Activated CD8-positive, alpha-beta T cell treated with anti-CD3 and anti-CD28 coated beads, Interleukin-2, amount 10 ng/mL, durations not matched to agents 7 days and 5 days (primary cell): ENCODE measurements at regions of chr14 and their contacts with region 1.

Region 1: GRCh38 chr14:50099335-50099734 is 17.0 kb downstream of the VCPKMT start:
- DNase-seq: no peak
- ATAC-seq: no peak
- H3K4me3 Mint-ChIP-seq: no peak overlapping the region
- H3K27ac Mint-ChIP-seq: peak overlapping the region; percentile 33
- H3K4me1 Mint-ChIP-seq: peaks cover 85% of the 10 kb centered on the region
- H3K27me3 Mint-ChIP-seq: no peaks in the 10 kb centered on the region

Region 2: GRCh38 chr14:49879683-49880204 is 219.6 kb before region 1 on chr14:
- CTCF ChIA-PET with region 1: interaction called, 23 read pairs
- POLR2A ChIA-PET with region 1: interaction called, 4 read pairs
- DNase-seq: peak; percentile 73
- ATAC-seq: peak; percentile 91
- H3K4me3 Mint-ChIP-seq: no peak overlapping the region
- H3K27ac Mint-ChIP-seq: peak overlapping the region; percentile 43
- H3K4me1 Mint-ChIP-seq: peaks cover 29% of the 10 kb centered on the region
- H3K27me3 Mint-ChIP-seq: peaks cover 2% of the 10 kb centered on the region

Region 3: DNA sequence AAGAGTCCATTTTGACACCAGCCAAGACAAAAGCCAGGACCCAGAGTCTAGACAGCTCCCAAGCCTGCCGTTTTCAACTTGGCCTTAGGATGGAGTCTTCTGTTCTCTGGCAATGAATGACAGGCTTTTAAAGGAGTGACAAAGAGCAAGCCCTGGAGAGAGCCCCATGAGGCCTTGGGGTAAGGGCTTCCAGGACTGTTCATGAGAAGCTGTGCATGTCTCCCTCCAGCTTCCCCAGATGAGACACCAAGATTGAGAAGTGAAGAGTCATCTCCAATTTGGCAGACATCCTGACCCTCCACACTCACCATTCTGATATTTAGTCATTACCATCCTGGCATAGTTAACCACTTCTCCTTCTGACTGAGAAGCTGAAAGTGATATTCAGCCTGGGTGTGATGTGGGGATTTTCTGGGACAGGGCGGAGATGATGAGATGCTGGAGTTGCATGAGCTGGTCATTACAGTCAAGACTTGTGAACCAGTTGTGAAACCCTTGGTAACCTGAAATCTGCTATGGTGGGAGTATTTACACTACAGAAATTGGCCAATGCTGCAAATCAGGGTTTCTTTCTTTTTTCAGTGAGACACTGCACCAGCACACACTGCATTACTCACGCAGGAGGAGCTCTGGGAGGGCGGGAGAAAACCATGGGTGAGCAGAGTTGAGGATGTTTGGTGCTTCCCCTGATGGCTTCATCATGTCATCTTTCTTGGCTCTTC is 60.8 kb before region 1 on chr14:
- CTCF ChIA-PET with region 1: interaction called, 16 read pairs
- POLR2A ChIA-PET with region 1: interaction called, 6 read pairs
- DNase-seq: peak; percentile 44
- ATAC-seq: peak; percentile 22
- H3K4me3 Mint-ChIP-seq: peak overlapping the region; percentile 74
- H3K27ac Mint-ChIP-seq: peak overlapping the region; percentile 98
- H3K4me1 Mint-ChIP-seq: peaks cover 85% of the 10 kb centered on the region
- H3K27me3 Mint-ChIP-seq: no peaks in the 10 kb centered on the region

Region 4: DNA sequence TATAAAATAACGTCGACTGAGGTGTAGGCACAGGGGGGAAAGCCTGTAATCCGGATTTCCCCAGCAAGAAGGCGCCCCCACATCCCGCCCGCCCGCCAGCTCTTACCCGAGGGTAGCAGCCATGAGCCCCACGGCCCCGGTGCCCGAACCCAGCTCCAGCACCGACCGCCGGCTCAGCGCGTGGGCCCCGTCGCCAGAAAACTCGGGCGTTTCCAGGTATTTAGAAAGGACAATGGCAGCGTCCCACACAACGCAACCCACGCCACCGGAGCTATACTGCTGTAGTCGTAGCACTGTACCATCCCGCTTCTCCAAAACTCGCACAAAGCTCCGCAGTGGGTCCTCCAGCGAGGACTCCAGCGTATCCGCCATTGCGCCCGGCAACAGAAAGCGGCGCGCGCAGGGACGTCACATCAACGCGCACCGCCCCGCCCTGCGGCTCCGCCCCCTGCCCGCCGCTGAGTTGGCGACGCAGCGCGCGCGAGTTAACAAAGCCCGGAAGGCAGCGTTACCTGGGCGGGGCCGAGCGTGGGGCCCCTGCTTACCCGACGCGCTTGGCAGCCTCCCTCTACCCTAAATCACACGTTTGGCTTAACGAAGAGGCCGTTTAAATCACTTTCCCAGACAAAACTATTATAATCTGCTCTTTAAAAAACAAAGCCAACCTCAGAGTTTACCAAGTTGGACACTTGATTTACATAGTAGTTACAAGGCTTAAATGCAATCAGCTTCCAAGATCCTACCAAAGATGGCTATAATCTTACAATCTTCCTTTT is 17.0 kb after region 1 on chr14 and contains the start of gene VCPKMT:
- CTCF ChIA-PET with region 1: interaction called, 11 read pairs
- POLR2A ChIA-PET with region 1: interaction called, 4 read pairs
- DNase-seq: peak; percentile 96
- ATAC-seq: peak; percentile 99
- H3K4me3 Mint-ChIP-seq: peak within 1 kb of the TSS; percentile 98
- H3K27ac Mint-ChIP-seq: peak within 1 kb of the TSS; percentile 99
- H3K4me1 Mint-ChIP-seq: peaks cover 36% of the 10 kb centered on the region
- H3K27me3 Mint-ChIP-seq: no peaks in the 10 kb centered on the region
- total RNA-seq, gene VCPKMT: 12.4 to 13.0 TPM